AG04449 (cell line): ENCODE measurements at regions of chr2 and their contacts with region 1.

Region 1: GRCh38 chr2:68594674-68595492 is 48.5 kb upstream of the PROKR1 start:
- DNase-seq: no peak
- H3K4me3 ChIP-seq: no peak overlapping the region
- CTCF ChIP-seq: peak; percentile 61

Region 2: GRCh38 chr2:68482296-68482820 is 112.5 kb before region 1 on chr2:
- CTCF ChIA-PET with region 1: interaction called, 38 read pairs
- POLR2A ChIA-PET with region 1: no interaction called
- DNase-seq: no peak
- H3K4me3 ChIP-seq: no peak overlapping the region
- CTCF ChIP-seq: no peak

Region 3: GRCh38 chr2:68487773-68488355 is 107.0 kb before region 1 on chr2:
- CTCF ChIA-PET with region 1: interaction called, 38 read pairs
- POLR2A ChIA-PET with region 1: no interaction called
- DNase-seq: no peak
- H3K4me3 ChIP-seq: no peak overlapping the region
- CTCF ChIP-seq: no peak

Region 4: GRCh38 chr2:68562934-68563333 is 31.9 kb before region 1 on chr2:
- CTCF ChIA-PET with region 1: interaction called, 12 read pairs
- POLR2A ChIA-PET with region 1: no interaction called
- DNase-seq: no peak
- H3K4me3 ChIP-seq: no peak overlapping the region
- CTCF ChIP-seq: no peak

Region 5: DNA sequence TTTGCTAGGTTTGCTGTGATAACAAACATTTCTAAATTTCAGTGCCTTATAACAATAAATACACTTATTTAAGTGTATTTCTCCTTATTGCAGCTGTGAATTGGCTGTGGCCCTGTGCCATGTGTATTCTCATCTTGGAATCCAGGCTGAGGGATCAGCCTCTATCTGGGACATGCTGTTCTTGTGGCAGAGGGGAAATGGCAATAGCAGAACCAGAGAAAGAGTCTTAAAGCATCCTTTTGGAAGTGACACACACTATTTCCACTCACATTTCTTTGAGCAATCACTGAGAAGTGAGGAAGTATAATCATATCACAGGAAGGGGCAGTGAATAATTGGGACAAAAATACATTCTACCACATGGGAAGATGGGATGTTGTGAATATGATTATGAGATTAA is 17.7 kb before region 1 on chr2:
- CTCF ChIA-PET with region 1: interaction called, 20 read pairs
- POLR2A ChIA-PET with region 1: no interaction called
- DNase-seq: no peak
- H3K4me3 ChIP-seq: no peak overlapping the region
- CTCF ChIP-seq: no peak

Region 6: DNA sequence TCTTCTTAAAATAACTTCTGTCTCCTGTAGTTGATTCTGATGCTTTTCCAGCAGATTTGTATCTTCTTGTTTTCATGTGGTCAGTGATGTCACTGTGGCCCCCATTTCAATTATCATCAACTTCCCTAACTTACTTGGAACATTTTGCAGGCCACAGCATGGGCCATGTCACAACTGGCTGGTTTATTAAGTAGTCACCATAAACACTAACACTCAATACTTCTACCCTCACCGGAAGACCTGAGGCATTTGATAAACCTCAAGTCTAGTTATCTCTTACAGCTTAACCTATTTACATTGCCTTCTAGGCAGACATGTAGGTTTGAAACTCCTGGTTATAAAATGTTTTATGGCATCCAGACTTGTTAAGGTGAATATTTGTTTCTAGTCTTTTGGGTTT is 11.1 kb after region 1 on chr2:
- CTCF ChIA-PET with region 1: interaction called, 12 read pairs
- POLR2A ChIA-PET with region 1: no interaction called
- DNase-seq: no peak
- H3K4me3 ChIP-seq: no peak overlapping the region
- CTCF ChIP-seq: no peak